Esophagus muscularis mucosa (tissue), 4 donors: ENCODE measurements at regions of chr9 and their contacts with region 1.

Region 1: GRCh38 chr9:82128011-82128696 is 139.6 kb downstream of the SPATA31D1 start:
- DNase-seq: no peak
- H3K4me3 ChIP-seq: no peak overlapping the region
- H3K27ac ChIP-seq: no peak overlapping the region
- H3K4me1 ChIP-seq: peaks cover 0 to 6% (median 2%) of the 10 kb centered on the region in 4 donors
- H3K27me3 ChIP-seq: no peaks in the 10 kb centered on the region
- CTCF ChIP-seq: no peak
- EP300 ChIP-seq: no peak
- POLR2A ChIP-seq: no peak

Region 2: GRCh38 chr9:82144803-82145202 is 16.6 kb after region 1 on chr9:
- intact Hi-C with region 1: loop called (anchors 1 kb)
- DNase-seq: no peak
- H3K4me3 ChIP-seq: no peak overlapping the region
- H3K27ac ChIP-seq: no peak overlapping the region
- H3K4me1 ChIP-seq: peaks cover 0 to 6% (median 4%) of the 10 kb centered on the region in 4 donors
- H3K27me3 ChIP-seq: no peaks in the 10 kb centered on the region
- CTCF ChIP-seq: no peak
- EP300 ChIP-seq: no peak
- POLR2A ChIP-seq: no peak